ENCODE measurements at regions of chr9 and their contacts with region 1.

Region 1: GRCh38 chr9:123940721-123941523 is 11.0 kb upstream of the DENND1A start:
- DNase-seq: peak; percentile 77
- ATAC-seq: peak; percentile 95
- H3K4me3 ChIP-seq: no peak overlapping the region
- H3K27ac ChIP-seq: no peak overlapping the region
- H3K4me1 ChIP-seq: no peaks in the 10 kb centered on the region
- H3K27me3 ChIP-seq: no peaks in the 10 kb centered on the region
- CTCF ChIP-seq: no peak
- EP300 ChIP-seq: peak; percentile 64 to 82; a peak in 2 of 4 replicates
- POLR2A ChIP-seq: no peak
- RAD21 ChIP-seq: no peak

Region 2: DNA sequence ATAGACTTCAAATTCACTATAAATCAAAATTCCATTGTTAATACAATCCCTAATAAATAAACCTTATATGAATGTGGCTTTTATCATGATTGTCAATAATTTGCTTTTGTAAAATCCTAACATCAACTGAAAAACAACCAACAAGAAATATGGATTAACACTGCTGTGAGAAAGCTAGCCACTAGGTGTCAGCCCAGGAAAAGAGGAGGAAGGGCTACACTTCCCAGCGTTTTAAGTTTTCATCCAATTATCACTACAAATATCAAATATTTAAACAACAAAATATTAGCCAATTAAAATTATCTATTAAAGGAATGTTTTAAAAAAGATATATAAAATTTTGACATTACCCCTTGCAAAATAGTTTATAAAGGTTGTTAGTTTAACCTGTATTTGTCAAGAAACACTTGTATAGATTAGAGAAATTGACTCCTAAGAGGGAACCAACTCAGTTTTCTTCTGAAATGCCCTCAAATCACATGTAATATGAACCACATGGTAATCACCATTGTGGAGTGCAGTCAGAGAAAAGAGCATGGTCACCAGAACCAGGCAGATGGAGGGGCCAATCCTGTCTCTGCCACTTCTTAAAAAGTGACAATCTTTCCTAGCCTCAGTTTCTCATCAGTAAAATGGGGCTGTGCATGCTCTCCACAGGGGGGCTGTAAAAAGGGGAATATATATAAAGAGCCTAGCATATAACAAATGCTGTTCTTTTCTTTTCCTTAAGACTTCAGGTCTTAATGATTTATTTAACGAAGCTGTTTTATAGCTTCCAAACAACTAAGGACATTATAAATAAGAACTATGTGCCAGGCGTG is 396.7 kb before region 1 on chr9:
- CTCF ChIA-PET with region 1: interaction called, 3 read pairs
- POLR2A ChIA-PET with region 1: no interaction called
- RAD21 ChIA-PET with region 1: interaction called, 9 read pairs
- SMC1A ChIA-PET with region 1: no interaction called
- in situ Hi-C with region 1: no loop called
- intact Hi-C with region 1: loop called (anchors 5 kb)
- DNase-seq: no peak
- ATAC-seq: peak; percentile 65
- H3K4me3 ChIP-seq: no peak overlapping the region
- H3K27ac ChIP-seq: no peak overlapping the region
- H3K4me1 ChIP-seq: no peaks in the 10 kb centered on the region
- H3K27me3 ChIP-seq: no peaks in the 10 kb centered on the region
- CTCF ChIP-seq: peak; percentile 68 to 89 (median 81)
- EP300 ChIP-seq: no peak
- POLR2A ChIP-seq: no peak
- RAD21 ChIP-seq: peak; percentile 98

Region 3: DNA sequence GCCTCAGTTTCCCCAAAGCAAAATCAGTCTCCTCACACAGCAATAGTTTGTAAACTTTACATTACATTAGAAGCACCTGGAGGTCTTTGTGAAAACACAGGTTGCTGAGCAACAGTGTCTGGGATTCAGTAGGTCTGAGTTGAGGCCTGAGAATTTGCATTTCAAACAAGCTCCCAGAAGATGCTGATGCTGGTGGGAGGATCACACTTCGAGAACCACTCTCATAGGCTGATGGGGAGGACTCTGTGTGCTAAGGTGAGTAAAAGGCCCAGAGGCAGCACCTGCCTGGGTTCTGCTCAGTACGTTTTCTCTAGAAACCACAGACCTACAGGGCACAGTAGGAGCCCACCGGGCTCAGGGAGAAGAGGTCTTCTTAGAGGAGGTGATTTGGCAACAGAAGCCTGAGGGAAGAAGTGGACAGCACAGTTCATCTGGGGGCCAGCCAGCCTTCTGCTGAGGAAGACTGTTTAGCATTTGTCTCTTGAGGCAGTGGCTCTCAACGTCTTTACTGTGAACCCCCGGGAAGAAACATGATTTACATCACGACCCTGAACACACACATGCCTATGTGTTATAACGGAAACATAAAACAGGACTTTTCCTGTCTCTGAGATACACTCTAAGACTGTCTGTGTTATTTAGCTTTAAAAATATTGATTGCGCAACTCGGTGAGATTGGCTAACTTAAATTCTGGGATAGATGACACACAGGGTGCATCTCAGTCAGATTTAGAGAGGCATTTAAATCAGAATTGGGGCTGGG is 13.8 kb after region 1 on chr9:
- CTCF ChIA-PET with region 1: interaction called, 9 read pairs
- POLR2A ChIA-PET with region 1: interaction called, 9 read pairs
- RAD21 ChIA-PET with region 1: interaction called, 20 read pairs
- SMC1A ChIA-PET with region 1: interaction called, 15 read pairs
- in situ Hi-C with region 1: no loop called
- intact Hi-C with region 1: no loop called
- DNase-seq: no peak
- ATAC-seq: no peak
- H3K4me3 ChIP-seq: no peak overlapping the region
- H3K27ac ChIP-seq: no peak overlapping the region
- H3K4me1 ChIP-seq: peaks cover 5% of the 10 kb centered on the region
- H3K27me3 ChIP-seq: no peaks in the 10 kb centered on the region
- CTCF ChIP-seq: no peak
- EP300 ChIP-seq: no peak
- POLR2A ChIP-seq: no peak
- RAD21 ChIP-seq: no peak

Region 4: DNA sequence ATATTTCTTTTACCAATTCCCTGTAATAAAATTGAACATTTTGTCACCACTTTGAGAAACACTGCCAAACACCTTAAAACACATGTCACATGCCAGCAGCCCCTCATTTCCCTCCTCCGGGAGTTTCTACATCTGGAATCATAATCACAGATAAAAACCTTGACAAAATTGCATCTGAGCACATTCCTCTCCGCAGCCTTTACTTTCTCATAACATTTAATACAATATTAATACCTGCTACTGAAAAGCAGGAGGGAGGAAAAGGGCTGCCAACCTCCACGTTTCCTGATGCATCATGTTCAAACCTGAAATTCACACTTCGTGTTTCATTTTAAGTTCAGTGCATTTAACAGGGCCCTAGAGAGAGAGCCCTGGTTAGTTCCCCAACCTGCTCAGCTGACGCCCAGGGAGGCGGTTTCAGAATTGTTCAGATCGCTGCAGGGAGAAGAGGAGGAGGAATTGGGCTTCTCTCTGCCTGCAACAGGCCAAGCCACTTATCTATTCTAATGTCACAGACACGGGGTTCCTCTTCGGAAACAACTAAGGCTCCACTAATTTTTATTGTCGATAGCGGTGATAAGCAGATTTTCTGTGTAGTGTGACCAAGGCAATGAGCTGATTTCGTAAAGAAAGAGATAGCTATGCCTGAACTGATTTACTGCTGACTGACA is 65.7 kb after region 1 on chr9:
- CTCF ChIA-PET with region 1: interaction called, 3 read pairs
- POLR2A ChIA-PET with region 1: interaction called, 4 read pairs
- RAD21 ChIA-PET with region 1: interaction called, 17 read pairs
- SMC1A ChIA-PET with region 1: interaction called, 7 read pairs
- in situ Hi-C with region 1: no loop called
- intact Hi-C with region 1: no loop called
- DNase-seq: no peak
- ATAC-seq: peak; percentile 62
- H3K4me3 ChIP-seq: no peak overlapping the region
- H3K27ac ChIP-seq: no peak overlapping the region
- H3K4me1 ChIP-seq: peaks cover 25% of the 10 kb centered on the region
- H3K27me3 ChIP-seq: peaks cover 0 to 54% of the 10 kb centered on the region in 2 experiments; a peak in 3 of 4 replicates
- CTCF ChIP-seq: no peak
- EP300 ChIP-seq: no peak; a peak in 1 of 4 replicates
- POLR2A ChIP-seq: no peak
- RAD21 ChIP-seq: no peak

Measured in GM12878 (cell line).